ENCODE measurements at regions of chr4 and their contacts with region 1.

Region 1: GRCh38 chr4:119286377-119287002 is 35.4 kb downstream of the FABP2 start:
- DNase-seq: no peak
- H3K4me3 ChIP-seq: no peak overlapping the region
- H3K27ac ChIP-seq: no peak overlapping the region
- H3K4me1 ChIP-seq: peaks cover 15% of the 10 kb centered on the region
- H3K27me3 ChIP-seq: no peaks in the 10 kb centered on the region
- CTCF ChIP-seq: peak; percentile 33 to 70 (median 55)
- POLR2A ChIP-seq: no peak

Region 2: DNA sequence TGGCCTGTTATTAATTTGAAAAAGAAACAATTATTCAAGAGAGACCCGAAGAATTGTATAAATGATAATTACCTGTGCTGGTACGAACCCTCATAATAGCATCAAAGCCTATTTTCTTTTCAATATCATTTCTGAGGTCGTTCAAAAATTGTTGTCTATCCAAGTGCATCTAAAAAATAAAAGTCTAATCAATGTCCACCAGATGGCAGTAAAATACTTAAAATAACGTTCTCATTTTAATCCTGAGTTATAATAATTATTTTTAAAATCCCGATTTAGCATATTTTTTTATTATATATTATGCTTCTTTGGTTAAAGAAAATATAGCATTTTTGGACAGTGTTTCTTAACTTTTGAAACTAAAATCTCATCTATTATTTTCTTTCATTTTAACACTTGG is 545.6 kb before region 1 on chr4:
- intact Hi-C with region 1: loop called (anchors 10 kb)
- DNase-seq: no peak
- H3K4me3 ChIP-seq: no peak overlapping the region
- H3K27ac ChIP-seq: peak overlapping the region; percentile 68
- H3K4me1 ChIP-seq: peaks cover 16% of the 10 kb centered on the region
- H3K27me3 ChIP-seq: no peaks in the 10 kb centered on the region
- CTCF ChIP-seq: peak; percentile 19 to 58 (median 49)
- POLR2A ChIP-seq: no peak

Region 3: GRCh38 chr4:118981839-118982381 is 304.6 kb before region 1 on chr4:
- intact Hi-C with region 1: loop called (anchors 5 kb)
- DNase-seq: no peak
- H3K4me3 ChIP-seq: no peak overlapping the region
- H3K27ac ChIP-seq: peak overlapping the region; percentile 21
- H3K4me1 ChIP-seq: no peaks in the 10 kb centered on the region
- H3K27me3 ChIP-seq: no peaks in the 10 kb centered on the region
- CTCF ChIP-seq: peak; percentile 61 to 82 (median 66)
- POLR2A ChIP-seq: no peak

Region 4: DNA sequence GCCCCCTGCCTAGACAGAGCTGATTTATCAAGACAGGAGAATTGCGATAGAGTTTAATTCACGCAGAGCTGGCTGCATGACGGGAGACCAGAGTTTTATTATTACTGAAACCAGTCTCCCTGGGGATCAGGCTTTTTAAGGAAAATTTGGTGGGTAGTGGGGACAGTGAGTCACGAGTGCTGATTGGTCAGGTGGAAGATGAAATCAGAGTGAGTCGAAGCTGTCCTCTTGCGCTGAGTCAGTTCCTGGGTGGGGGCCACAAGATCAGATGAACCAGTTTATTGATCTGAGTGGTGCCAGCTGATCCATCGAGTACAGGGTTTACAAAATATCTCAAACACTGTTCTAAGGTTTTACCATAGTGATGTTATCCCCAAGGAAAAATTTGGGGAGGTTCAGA is 114.3 kb before region 1 on chr4:
- intact Hi-C with region 1: no loop called
- DNase-seq: no peak
- H3K4me3 ChIP-seq: no peak overlapping the region
- H3K27ac ChIP-seq: no peak overlapping the region
- H3K4me1 ChIP-seq: no peaks in the 10 kb centered on the region
- H3K27me3 ChIP-seq: no peaks in the 10 kb centered on the region
- CTCF ChIP-seq: no peak
- POLR2A ChIP-seq: no peak

Region 5: GRCh38 chr4:119212234-119212963 is 74.1 kb before region 1 on chr4 and contains the start of gene USP53:
- intact Hi-C with region 1: loop called (anchors 10 kb)
- DNase-seq: peak; percentile 98 to 99
- H3K4me3 ChIP-seq: peak within 1 kb of the TSS; percentile 90 to 91
- H3K27ac ChIP-seq: peak within 1 kb of the TSS; percentile 96
- H3K4me1 ChIP-seq: peaks cover 10% of the 10 kb centered on the region
- H3K27me3 ChIP-seq: no peaks in the 10 kb centered on the region
- CTCF ChIP-seq: peak in 1 of 3 experiments; percentile 54
- POLR2A ChIP-seq: peak in 1 of 2 donors; percentile 93
- total RNA-seq, gene USP53: 53.5 TPM

Region 6: DNA sequence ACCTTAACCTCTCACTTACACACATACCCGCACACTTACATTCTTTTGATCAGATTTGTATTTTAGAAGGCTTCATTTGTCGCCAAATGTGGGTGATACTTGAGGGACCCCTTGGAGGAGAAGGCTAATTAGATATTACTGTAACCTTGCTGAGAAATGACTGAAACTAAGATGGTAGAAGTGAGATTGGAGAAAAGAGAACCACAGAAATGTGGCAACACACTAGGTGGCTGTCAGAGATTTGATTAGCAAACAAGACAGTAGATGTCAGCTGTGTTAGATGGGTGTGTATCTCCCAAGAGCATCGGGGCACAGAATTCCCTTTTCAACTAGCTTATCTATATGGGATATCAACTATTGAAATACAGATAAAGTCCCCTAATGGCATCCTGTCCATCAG is 184.8 kb after region 1 on chr4:
- intact Hi-C with region 1: no loop called
- DNase-seq: no peak
- H3K4me3 ChIP-seq: no peak overlapping the region
- H3K27ac ChIP-seq: no peak overlapping the region
- H3K4me1 ChIP-seq: no peaks in the 10 kb centered on the region
- H3K27me3 ChIP-seq: no peaks in the 10 kb centered on the region
- CTCF ChIP-seq: no peak
- POLR2A ChIP-seq: no peak

Measured in vagina (tissue), 2 donors.